GM12878 (cell line): ENCODE measurements at regions of chr14 and their contacts with region 1.

Region 1: GRCh38 chr14:34075042-34075744 is 124.3 kb upstream of the EGLN3 start:
- DNase-seq: no peak
- ATAC-seq: peak; percentile 86
- H3K4me3 ChIP-seq: no peak overlapping the region
- H3K27ac ChIP-seq: no peak overlapping the region
- H3K4me1 ChIP-seq: peaks cover 17% of the 10 kb centered on the region
- H3K27me3 ChIP-seq: no peaks in the 10 kb centered on the region
- CTCF ChIP-seq: no peak
- EP300 ChIP-seq: no peak
- POLR2A ChIP-seq: no peak
- RAD21 ChIP-seq: no peak

Region 2: DNA sequence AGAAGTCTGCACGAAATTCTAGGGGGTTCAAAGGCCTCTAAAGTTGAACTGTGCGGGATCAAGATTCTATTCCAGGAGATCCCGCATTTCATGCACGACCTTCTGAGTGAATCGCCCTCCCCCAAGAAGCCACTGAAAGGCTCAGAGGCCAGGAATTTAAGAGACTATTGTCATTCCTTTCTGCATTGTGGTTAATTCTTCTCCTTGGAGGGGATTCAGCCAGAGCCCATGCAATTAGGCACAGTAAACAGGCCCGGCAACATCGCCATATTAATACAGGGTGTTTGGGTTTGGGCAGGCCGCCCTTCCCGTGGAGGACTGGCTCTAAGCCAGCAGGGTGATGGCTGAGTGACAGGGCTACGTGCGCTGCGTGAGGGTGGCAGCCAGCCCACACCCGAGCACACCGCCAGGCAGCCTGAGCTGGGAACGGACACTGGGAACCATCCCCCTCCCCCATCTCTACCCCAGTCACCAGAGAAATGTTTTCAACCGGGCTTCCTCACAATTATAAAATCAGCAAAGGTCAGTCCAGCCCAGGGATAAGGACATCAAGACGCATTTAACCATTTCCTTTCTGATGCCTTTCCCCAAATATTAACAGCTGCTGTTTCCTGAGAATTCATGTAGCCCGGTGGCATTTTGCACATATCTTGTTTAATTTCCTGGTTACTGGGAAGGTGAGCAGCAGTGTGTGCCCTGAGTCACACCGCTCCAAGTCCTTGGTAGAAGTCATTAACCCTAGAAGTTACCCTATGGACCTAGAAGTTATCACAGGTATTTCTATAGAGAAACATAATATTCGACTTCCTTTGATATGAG is 136.9 kb before region 1 on chr14:
- CTCF ChIA-PET with region 1: interaction called, 3 read pairs
- POLR2A ChIA-PET with region 1: interaction called, 3 read pairs
- RAD21 ChIA-PET with region 1: interaction called, 10 read pairs
- SMC1A ChIA-PET with region 1: interaction called, 3 read pairs
- in situ Hi-C with region 1: no loop called
- intact Hi-C with region 1: no loop called
- DNase-seq: peak; percentile 36
- ATAC-seq: no peak
- H3K4me3 ChIP-seq: no peak overlapping the region; the same call in 1 of the 2 replicates
- H3K27ac ChIP-seq: no peak overlapping the region
- H3K4me1 ChIP-seq: no peaks in the 10 kb centered on the region
- H3K27me3 ChIP-seq: no peaks in the 10 kb centered on the region
- CTCF ChIP-seq: no peak
- EP300 ChIP-seq: no peak
- POLR2A ChIP-seq: no peak
- RAD21 ChIP-seq: no peak

Region 3: GRCh38 chr14:34043627-34044372 is 31.4 kb before region 1 on chr14:
- CTCF ChIA-PET with region 1: interaction called, 4 read pairs
- POLR2A ChIA-PET with region 1: interaction called, 6 read pairs
- RAD21 ChIA-PET with region 1: interaction called, 12 read pairs
- SMC1A ChIA-PET with region 1: interaction called, 7 read pairs
- in situ Hi-C with region 1: no loop called
- intact Hi-C with region 1: no loop called
- DNase-seq: peak; percentile 97
- ATAC-seq: peak; percentile 97
- H3K4me3 ChIP-seq: peak overlapping the region; percentile 21; the same call in 1 of the 2 replicates
- H3K27ac ChIP-seq: 0 out of 2 replicates have a peak overlapping the region, but pooled peaks have one; percentile 22
- H3K4me1 ChIP-seq: peaks cover 36% of the 10 kb centered on the region
- H3K27me3 ChIP-seq: no peaks in the 10 kb centered on the region
- CTCF ChIP-seq: no peak
- EP300 ChIP-seq: peak; percentile 89 to 92
- POLR2A ChIP-seq: no peak
- RAD21 ChIP-seq: no peak